CD8-positive, alpha-beta T cell (primary cell): ENCODE measurements at regions of chr6 and their contacts with region 1.

Region 1: GRCh38 chr6:33391278-33391921 is at the start of gene KIFC1:
- DNase-seq: peak; percentile 98 to 100 (median 99)
- ATAC-seq: peak; percentile 87
- H3K4me3 ChIP-seq: peak within 1 kb of the TSS; percentile 57 to 61
- H3K4me3 Mint-ChIP-seq: peak within 1 kb of the TSS; percentile 85
- H3K27ac ChIP-seq: peak within 1 kb of the TSS; percentile 68 to 88
- H3K27ac Mint-ChIP-seq: peak within 1 kb of the TSS; percentile 97
- H3K4me1 ChIP-seq: peaks cover 18% of the 10 kb centered on the region
- H3K4me1 Mint-ChIP-seq: peaks cover 25% of the 10 kb centered on the region
- H3K27me3 ChIP-seq: no peaks in the 10 kb centered on the region
- H3K27me3 Mint-ChIP-seq: no peaks in the 10 kb centered on the region
- CTCF ChIP-seq: peak; percentile 86
- total RNA-seq, gene KIFC1: 1.6 to 2.1 TPM

Region 2: DNA sequence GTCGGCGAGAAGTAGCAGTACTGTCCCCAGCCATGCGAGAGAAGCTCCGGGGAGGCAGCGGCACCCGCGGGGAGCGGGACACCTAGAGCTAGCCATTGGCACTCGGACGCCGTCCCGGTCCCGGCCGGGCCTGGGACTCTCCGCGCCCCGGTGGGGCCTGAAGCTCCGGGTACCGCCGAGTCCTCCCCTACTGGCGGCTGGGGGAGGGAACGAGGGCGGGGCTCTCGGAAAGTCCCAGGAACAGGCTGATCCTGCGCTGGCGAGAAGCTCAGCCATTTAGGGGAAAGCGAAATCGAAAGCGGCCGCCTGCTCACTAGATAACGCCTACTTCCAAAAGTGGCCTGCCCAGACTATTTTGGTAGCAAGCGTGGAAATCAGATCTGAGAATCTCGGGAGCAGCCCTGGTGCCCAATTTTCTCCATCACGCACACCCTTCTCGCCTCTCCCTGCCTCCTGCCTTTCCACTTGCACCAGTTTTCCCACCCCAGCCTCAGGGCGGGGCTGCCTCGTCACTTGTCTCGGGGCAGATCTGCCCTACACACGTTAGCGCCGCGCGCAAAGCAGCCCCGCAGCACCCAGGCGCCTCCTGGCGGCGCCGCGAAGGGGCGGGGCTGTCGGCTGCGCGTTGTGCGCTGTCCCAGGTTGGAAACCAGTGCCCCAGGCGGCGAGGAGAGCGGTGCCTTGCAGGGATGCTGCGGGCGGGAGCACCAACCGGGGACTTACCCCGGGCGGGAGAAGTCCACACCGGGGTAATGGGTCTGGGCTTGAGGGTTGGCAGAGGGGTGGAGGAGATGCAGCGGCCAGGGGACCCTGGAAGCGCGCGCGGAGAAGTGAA is 537.6 kb before region 1 on chr6 and contains the starts of genes PSMB9 and TAP1:
- CTCF ChIA-PET with region 1: no interaction called
- POLR2A ChIA-PET with region 1: no interaction called
- intact Hi-C with region 1: loop called in 1 of 2 experiments (anchors 5 kb)
- DNase-seq: peak; percentile 83 to 99 (median 94)
- ATAC-seq: peak; percentile 78
- H3K4me3 ChIP-seq: peak within 1 kb of the TSS; percentile 85 to 99
- H3K4me3 Mint-ChIP-seq: peak within 1 kb of the TSS; percentile 99
- H3K27ac ChIP-seq: peak within 1 kb of the TSS; percentile 98
- H3K27ac Mint-ChIP-seq: peak within 1 kb of the TSS; percentile 100
- H3K4me1 ChIP-seq: peaks cover 62% of the 10 kb centered on the region
- H3K4me1 Mint-ChIP-seq: peaks cover 69% of the 10 kb centered on the region
- H3K27me3 ChIP-seq: no peaks in the 10 kb centered on the region
- H3K27me3 Mint-ChIP-seq: no peaks in the 10 kb centered on the region
- CTCF ChIP-seq: peak; percentile 89
- total RNA-seq, gene PSMB9: 32.9 to 34.7 TPM
- total RNA-seq, gene TAP1: 98.0 to 98.1 TPM

Region 3: DNA sequence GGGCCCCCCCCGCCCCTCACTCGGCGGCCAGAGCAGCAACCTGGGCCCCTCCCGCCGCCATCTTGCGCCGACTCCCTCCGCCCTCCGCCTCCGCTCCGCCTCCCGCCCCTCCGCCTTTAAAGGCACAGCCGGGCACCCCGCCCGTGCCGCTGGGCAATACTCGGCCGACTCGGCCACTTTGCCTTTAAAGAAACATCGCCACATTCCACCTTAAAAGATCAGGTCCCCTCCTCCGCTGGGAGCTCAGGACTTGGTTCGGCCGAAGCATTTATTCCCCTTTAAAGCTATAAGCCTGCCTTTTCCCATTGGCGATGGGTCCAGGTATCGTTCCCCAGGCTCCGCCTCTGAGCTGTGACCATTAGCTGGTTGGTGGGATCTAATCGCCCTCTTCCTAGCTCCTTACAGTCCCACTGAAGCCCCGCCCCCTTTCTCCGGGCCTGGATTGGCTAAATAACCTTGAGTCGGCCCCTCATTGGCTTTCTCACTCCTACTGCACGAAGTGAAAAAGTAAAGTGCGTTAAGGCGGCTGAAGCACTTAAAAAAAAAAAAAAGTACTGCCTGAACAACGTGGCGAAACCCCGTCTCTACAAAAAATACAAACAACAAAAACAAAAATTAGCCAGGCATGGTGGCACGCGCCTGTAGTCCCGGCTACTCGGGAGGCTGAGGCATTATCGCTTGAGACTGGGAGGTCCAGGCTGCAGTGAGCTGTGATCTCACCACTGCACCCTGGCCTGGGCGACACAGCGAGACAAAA is 73.6 kb before region 1 on chr6 and contains the start of gene ZBTB22:
- CTCF ChIA-PET with region 1: interaction called, 5 read pairs
- POLR2A ChIA-PET with region 1: interaction called, 9 read pairs
- intact Hi-C with region 1: loop called (anchors 1 kb)
- DNase-seq: peak; percentile 91 to 98 (median 96)
- ATAC-seq: peak; percentile 61
- H3K4me3 ChIP-seq: peak within 1 kb of the TSS; percentile 72 to 78
- H3K4me3 Mint-ChIP-seq: peak within 1 kb of the TSS; percentile 99
- H3K27ac ChIP-seq: peak within 1 kb of the TSS; percentile 60 to 99
- H3K27ac Mint-ChIP-seq: peak within 1 kb of the TSS; percentile 97
- H3K4me1 ChIP-seq: peaks cover 65% of the 10 kb centered on the region
- H3K4me1 Mint-ChIP-seq: peaks cover 77% of the 10 kb centered on the region
- H3K27me3 ChIP-seq: no peaks in the 10 kb centered on the region
- H3K27me3 Mint-ChIP-seq: no peaks in the 10 kb centered on the region
- CTCF ChIP-seq: no peak
- total RNA-seq, gene ZBTB22: 8.8 to 9.3 TPM

Region 4: DNA sequence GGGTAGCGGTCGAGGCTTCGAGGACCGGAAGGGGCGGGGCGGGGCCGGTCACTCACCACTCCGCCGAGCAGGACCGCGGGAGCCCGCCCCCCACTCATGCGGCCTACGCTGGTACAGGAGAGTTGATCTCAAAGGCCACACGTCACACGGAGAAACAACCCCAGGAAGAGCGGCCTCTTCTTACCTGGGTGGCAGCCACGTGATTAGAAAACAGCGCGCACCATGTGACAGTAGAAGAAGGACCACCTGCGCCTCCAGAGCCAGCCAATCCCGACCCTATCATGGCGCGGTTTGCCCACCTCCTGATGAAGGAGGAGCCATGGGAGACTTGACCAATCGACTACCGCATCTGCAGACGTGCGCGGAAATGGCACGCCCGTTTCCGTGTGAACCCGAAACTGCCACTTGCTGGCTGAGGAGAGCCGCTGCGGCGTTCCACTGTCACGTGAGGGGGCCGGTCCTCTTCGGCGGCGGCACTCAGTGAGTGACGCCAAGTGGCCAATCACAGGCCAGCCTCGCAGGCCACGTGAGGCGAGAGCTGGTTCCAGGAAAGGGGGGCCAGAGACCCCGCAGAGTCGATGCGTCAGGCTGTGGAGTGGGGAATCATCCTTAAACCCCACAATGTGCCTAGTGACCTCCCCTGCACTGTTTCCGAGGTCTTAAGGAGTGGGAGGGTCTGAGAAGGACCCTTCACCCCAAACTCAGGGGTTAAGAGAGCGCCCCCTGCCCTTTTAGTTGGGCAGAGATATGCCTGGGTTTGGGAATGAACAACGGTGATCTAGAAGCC is 26.7 kb after region 1 on chr6 and contains the start of gene CUTA:
- CTCF ChIA-PET with region 1: interaction called, 5 read pairs
- POLR2A ChIA-PET with region 1: interaction called, 8 read pairs
- intact Hi-C with region 1: loop called (anchors 1 kb)
- DNase-seq: peak; percentile 96 to 100 (median 99)
- ATAC-seq: peak; percentile 87
- H3K4me3 ChIP-seq: peak within 1 kb of the TSS; percentile 68 to 70
- H3K4me3 Mint-ChIP-seq: peak within 1 kb of the TSS; percentile 94
- H3K27ac ChIP-seq: peak within 1 kb of the TSS; percentile 83 to 88
- H3K27ac Mint-ChIP-seq: peak within 1 kb of the TSS; percentile 97
- H3K4me1 ChIP-seq: peaks cover 68% of the 10 kb centered on the region
- H3K4me1 Mint-ChIP-seq: peaks cover 83% of the 10 kb centered on the region
- H3K27me3 ChIP-seq: no peaks in the 10 kb centered on the region
- H3K27me3 Mint-ChIP-seq: no peaks in the 10 kb centered on the region
- CTCF ChIP-seq: peak; percentile 27
- total RNA-seq, gene CUTA: 159 to 177 TPM

Region 5: DNA sequence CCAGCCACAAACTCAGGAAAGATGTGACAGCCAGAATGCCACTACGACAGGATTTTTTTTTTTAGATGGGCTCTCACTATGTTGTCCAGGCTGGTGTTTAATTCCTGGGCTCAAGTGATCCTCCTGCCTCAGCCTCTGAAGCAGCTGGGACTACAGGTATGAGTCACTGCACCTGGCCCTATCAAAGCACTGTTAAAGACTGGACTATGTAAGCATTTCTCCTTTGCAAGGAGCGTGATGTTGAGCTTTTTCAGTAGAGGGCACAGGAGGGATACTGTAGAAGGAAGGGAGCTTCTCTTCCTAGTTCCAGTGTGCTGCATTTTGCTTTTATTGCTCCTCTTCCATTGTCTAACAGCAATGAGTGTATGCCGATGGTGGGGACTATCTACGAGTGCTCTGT is 98.8 kb after region 1 on chr6:
- CTCF ChIA-PET with region 1: no interaction called
- POLR2A ChIA-PET with region 1: no interaction called
- intact Hi-C with region 1: loop called in 1 of 2 experiments (anchors 5 kb)
- DNase-seq: no peak
- ATAC-seq: no peak
- H3K4me3 ChIP-seq: no peak overlapping the region
- H3K4me3 Mint-ChIP-seq: no peak overlapping the region
- H3K27ac ChIP-seq: no peak overlapping the region
- H3K27ac Mint-ChIP-seq: no peak overlapping the region
- H3K4me1 ChIP-seq: no peaks in the 10 kb centered on the region
- H3K4me1 Mint-ChIP-seq: no peaks in the 10 kb centered on the region
- H3K27me3 ChIP-seq: no peaks in the 10 kb centered on the region
- H3K27me3 Mint-ChIP-seq: peaks cover 8% of the 10 kb centered on the region
- CTCF ChIP-seq: no peak

Region 6: GRCh38 chr6:33620856-33621710 is 229.7 kb after region 1 on chr6 and contains the start of gene ITPR3:
- CTCF ChIA-PET with region 1: no interaction called
- POLR2A ChIA-PET with region 1: no interaction called
- intact Hi-C with region 1: loop called in 1 of 2 experiments (anchors 1 kb)
- DNase-seq: peak; percentile 55 to 92 (median 72)
- ATAC-seq: peak; percentile 84
- H3K4me3 ChIP-seq: peak within 1 kb of the TSS; percentile 79 to 95
- H3K4me3 Mint-ChIP-seq: peak within 1 kb of the TSS; percentile 90
- H3K27ac ChIP-seq: peak within 1 kb of the TSS; percentile 78 to 86
- H3K27ac Mint-ChIP-seq: peak within 1 kb of the TSS; percentile 91
- H3K4me1 ChIP-seq: peaks cover 38% of the 10 kb centered on the region
- H3K4me1 Mint-ChIP-seq: peaks cover 66% of the 10 kb centered on the region
- H3K27me3 ChIP-seq: no peaks in the 10 kb centered on the region
- H3K27me3 Mint-ChIP-seq: no peaks in the 10 kb centered on the region
- CTCF ChIP-seq: no peak
- total RNA-seq, gene ITPR3: 39.5 to 40.1 TPM